CD4-positive, alpha-beta T cell (primary cell): ENCODE measurements at regions of chr2 and their contacts with region 1.

Region 1: GRCh38 chr2:230219419-230220331 is at the start of gene SP110:
- DNase-seq: peak; percentile 59 to 90 (median 72)
- ATAC-seq: peak; percentile 92
- H3K4me3 ChIP-seq: peak within 1 kb of the TSS; percentile 86
- H3K4me3 Mint-ChIP-seq: peak within 1 kb of the TSS; percentile 94
- H3K27ac ChIP-seq: peak within 1 kb of the TSS; percentile 66 to 78
- H3K27ac Mint-ChIP-seq: peak within 1 kb of the TSS; percentile 98
- H3K4me1 ChIP-seq: peaks cover 35% of the 10 kb centered on the region
- H3K4me1 Mint-ChIP-seq: peaks cover 63% of the 10 kb centered on the region
- H3K27me3 ChIP-seq: no peaks in the 10 kb centered on the region
- H3K27me3 Mint-ChIP-seq: no peaks in the 10 kb centered on the region
- CTCF ChIP-seq: no peak
- total RNA-seq, gene SP110: 59.4 to 63.7 TPM

Region 2: GRCh38 chr2:230205034-230205433 is 14.6 kb before region 1 on chr2:
- CTCF ChIA-PET with region 1: interaction called, 4 read pairs
- POLR2A ChIA-PET with region 1: interaction called, 21 read pairs
- intact Hi-C with region 1: no loop called
- DNase-seq: no peak
- ATAC-seq: no peak
- H3K4me3 ChIP-seq: no peak overlapping the region
- H3K4me3 Mint-ChIP-seq: no peak overlapping the region
- H3K27ac ChIP-seq: no peak overlapping the region
- H3K27ac Mint-ChIP-seq: peak overlapping the region; percentile 34
- H3K4me1 ChIP-seq: peaks cover 4% of the 10 kb centered on the region
- H3K4me1 Mint-ChIP-seq: peaks cover 18% of the 10 kb centered on the region
- H3K27me3 ChIP-seq: no peaks in the 10 kb centered on the region
- H3K27me3 Mint-ChIP-seq: no peaks in the 10 kb centered on the region
- CTCF ChIP-seq: no peak

Region 3: GRCh38 chr2:230262246-230262645 is 42.6 kb after region 1 on chr2:
- CTCF ChIA-PET with region 1: no interaction called
- POLR2A ChIA-PET with region 1: interaction called, 10 read pairs
- intact Hi-C with region 1: no loop called
- DNase-seq: peak in 3 of 14 experiments; percentile 42 to 73 (median 50)
- ATAC-seq: peak; percentile 94
- H3K4me3 ChIP-seq: peak overlapping the region; percentile 19
- H3K4me3 Mint-ChIP-seq: peak overlapping the region; percentile 40
- H3K27ac ChIP-seq: peak overlapping the region in 1 of 2 donors; percentile 48
- H3K27ac Mint-ChIP-seq: peak overlapping the region; percentile 76
- H3K4me1 ChIP-seq: peaks cover 3% of the 10 kb centered on the region
- H3K4me1 Mint-ChIP-seq: peaks cover 49% of the 10 kb centered on the region
- H3K27me3 ChIP-seq: no peaks in the 10 kb centered on the region
- H3K27me3 Mint-ChIP-seq: no peaks in the 10 kb centered on the region
- CTCF ChIP-seq: no peak

Region 4: GRCh38 chr2:230326453-230327417 is 107.1 kb after region 1 on chr2 and contains the start of gene SP140L:
- CTCF ChIA-PET with region 1: no interaction called
- POLR2A ChIA-PET with region 1: interaction called, 38 read pairs
- intact Hi-C with region 1: loop called (anchors 2 kb)
- DNase-seq: peak; percentile 63 to 91 (median 77)
- ATAC-seq: peak; percentile 99
- H3K4me3 ChIP-seq: peak within 1 kb of the TSS; percentile 70
- H3K4me3 Mint-ChIP-seq: peak within 1 kb of the TSS; percentile 90
- H3K27ac ChIP-seq: peak within 1 kb of the TSS; percentile 89 to 92
- H3K27ac Mint-ChIP-seq: peak within 1 kb of the TSS; percentile 98
- H3K4me1 ChIP-seq: peaks cover 45% of the 10 kb centered on the region
- H3K4me1 Mint-ChIP-seq: peaks cover 85% of the 10 kb centered on the region
- H3K27me3 ChIP-seq: no peaks in the 10 kb centered on the region
- H3K27me3 Mint-ChIP-seq: no peaks in the 10 kb centered on the region
- CTCF ChIP-seq: no peak
- total RNA-seq, gene SP140L: 55.3 to 64.1 TPM

Region 5: GRCh38 chr2:230614913-230615332 is 395.2 kb after region 1 on chr2:
- CTCF ChIA-PET with region 1: no interaction called
- POLR2A ChIA-PET with region 1: interaction called, 3 read pairs
- intact Hi-C with region 1: loop called (anchors 5 kb)
- DNase-seq: peak in 3 of 14 experiments; percentile 15 to 52 (median 17)
- ATAC-seq: peak; percentile 43
- H3K4me3 ChIP-seq: no peak overlapping the region
- H3K4me3 Mint-ChIP-seq: no peak overlapping the region
- H3K27ac ChIP-seq: no peak overlapping the region
- H3K27ac Mint-ChIP-seq: no peak overlapping the region
- H3K4me1 ChIP-seq: peaks cover 17% of the 10 kb centered on the region
- H3K4me1 Mint-ChIP-seq: peaks cover 12% of the 10 kb centered on the region
- H3K27me3 ChIP-seq: no peaks in the 10 kb centered on the region
- H3K27me3 Mint-ChIP-seq: no peaks in the 10 kb centered on the region
- CTCF ChIP-seq: no peak